ENCODE measurements at regions of chr4 and their contacts with region 1.

Region 1: DNA sequence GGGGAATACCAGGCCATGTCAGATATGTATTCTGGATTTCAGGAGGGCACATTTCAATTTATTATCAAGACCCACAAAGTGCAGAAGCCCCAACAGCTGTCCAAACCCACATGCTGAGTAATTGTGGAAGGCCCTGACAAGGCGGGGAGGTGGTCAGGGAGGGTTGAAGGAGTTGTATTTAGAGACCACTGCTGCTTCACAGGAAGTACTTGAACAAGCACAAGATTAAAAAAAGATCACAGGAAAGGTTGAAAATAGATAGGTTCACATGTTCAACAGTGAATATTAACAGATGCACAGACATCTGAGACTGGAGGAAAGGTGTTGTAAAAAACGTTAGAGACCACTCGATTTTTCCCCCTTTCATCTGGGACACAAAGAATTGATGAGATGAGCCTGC is 17.9 kb downstream of the ATP8A1 start:
- DNase-seq: no peak
- H3K4me3 ChIP-seq: no peak overlapping the region
- H3K27ac ChIP-seq: no peak overlapping the region
- H3K4me1 ChIP-seq: no peaks in the 10 kb centered on the region
- H3K27me3 ChIP-seq: no peaks in the 10 kb centered on the region
- CTCF ChIP-seq: no peak
- POLR2A ChIP-seq: no peak

Region 2: DNA sequence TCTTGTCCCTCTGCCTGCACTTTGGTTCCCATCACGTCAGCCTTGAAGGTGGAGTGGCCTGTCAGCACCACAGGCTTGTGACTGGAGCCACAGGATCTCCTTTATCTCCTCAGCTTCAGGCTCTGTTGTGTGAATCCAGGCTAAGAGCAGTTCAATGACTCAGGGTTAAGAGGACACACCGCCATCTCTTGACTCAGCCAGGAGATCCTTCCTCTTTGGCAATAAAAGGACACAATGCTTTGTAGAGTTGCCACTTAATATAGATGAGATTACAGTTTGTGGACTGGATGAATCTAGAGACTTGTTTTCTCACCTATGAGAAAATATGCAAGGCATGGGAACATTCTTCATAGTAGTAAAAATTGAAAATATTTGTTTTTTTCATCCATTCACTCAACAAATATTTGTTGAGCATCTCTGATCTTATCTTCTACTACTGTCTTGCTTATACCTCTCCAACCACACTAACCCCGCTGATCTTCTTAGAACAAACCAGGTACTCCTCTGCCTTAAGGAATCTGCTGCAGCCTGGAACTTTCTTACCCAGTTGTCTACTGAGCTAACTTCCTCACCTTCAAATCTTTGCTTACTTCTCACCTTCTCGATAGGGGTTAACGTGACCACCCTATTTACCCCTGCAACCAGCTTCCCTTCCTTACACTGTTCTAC is 1320.0 kb before region 1 on chr4:
- intact Hi-C with region 1: loop called (anchors 5 kb)
- DNase-seq: no peak
- H3K4me3 ChIP-seq: no peak overlapping the region
- H3K27ac ChIP-seq: no peak overlapping the region
- H3K4me1 ChIP-seq: no peaks in the 10 kb centered on the region
- H3K27me3 ChIP-seq: no peaks in the 10 kb centered on the region
- CTCF ChIP-seq: no peak
- POLR2A ChIP-seq: no peak

Region 3: DNA sequence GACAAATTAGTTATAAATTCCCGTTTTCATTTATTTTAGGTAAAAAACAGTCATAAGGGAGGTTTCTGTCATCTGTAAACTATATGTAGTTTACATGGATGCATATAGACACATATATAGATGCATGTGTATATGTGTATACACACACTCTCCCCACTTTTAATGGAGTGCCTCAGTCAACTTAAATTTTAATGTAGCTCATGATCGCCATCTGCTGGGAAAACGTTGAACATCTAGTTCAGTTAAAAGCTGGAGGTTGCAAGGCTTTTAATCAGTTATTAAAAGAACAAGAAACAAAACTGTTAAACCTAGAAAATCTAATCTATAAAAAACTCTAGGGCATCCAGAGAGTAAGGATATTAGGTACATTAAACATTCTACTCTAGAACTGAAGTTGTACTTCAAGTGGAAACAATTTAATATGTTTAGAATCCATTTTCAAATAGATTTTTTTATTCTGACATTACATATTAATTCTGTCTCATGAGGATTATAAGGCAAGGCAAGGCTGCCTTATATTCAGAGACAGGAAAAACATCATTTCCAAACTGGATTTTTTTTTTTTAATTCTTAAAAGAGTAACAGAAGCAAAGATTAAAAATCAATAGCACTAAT is 119.1 kb before region 1 on chr4:
- intact Hi-C with region 1: no loop called
- DNase-seq: peak in 1 of 2 donors; percentile 21
- H3K4me3 ChIP-seq: no peak overlapping the region
- H3K27ac ChIP-seq: no peak overlapping the region
- H3K4me1 ChIP-seq: no peaks in the 10 kb centered on the region
- H3K27me3 ChIP-seq: no peaks in the 10 kb centered on the region
- CTCF ChIP-seq: peak; percentile 48 to 68 (median 60)
- POLR2A ChIP-seq: no peak

Measured in uterus (tissue), 4 donors.